Spleen (tissue), 13 donors: ENCODE measurements at regions of chr6 and their contacts with region 1.

Region 1: DNA sequence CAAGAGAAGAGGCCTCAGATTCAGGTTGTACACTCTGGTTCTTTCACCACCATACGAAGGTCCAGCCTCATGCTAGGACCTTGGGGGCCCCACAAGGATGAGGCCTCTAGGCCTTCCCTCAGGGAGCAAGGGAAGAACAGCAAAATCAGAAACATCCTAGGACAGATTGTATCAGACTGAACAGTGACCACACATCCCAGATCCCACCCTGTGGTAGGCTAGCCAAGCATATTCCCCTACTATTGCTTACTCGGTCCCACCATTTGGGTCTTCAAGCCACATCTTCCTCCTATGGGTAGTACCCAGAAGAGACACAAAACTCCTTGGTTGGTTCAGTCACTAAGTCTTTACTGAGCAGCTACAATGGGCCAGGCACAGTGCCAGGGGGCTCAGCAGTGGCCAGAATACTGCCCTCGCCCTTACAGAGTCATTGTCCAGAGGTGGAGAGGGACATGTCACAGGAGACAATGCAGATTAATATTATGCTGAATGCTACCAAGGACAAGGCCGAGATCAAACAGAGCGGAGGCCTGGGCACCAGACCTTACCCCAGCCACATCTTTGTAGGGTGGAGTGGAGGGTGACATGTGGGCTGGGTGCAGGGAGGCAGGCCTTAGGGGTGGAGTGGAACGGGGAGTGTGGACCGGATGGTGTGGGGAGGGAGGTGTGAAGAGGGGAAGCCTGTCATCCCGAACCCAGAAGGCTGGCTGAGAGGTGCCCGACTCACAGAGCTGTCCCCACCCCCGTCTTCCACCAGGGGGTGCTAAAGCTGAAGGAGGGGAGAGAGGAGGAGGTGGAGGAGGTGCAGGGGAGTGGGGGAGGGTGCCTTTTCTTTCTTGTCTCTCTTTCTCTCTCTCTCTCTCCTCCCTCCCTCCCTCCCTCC is 6.8 kb upstream of the MAPK13 start:
- DNase-seq: peak; percentile 96
- H3K4me3 ChIP-seq: peak overlapping the region in 1 of 8 donors; percentile 58
- H3K27ac ChIP-seq: peak overlapping the region in 7 of 8 donors; percentile 49 to 97 (median 96)
- H3K4me1 ChIP-seq: peaks cover 38 to 100% (median 82%) of the 10 kb centered on the region in 6 donors
- H3K27me3 ChIP-seq: no peaks in the 10 kb centered on the region
- CTCF ChIP-seq: peak; percentile 72 to 94 (median 90)
- POLR2A ChIP-seq: no peak

Region 2: GRCh38 chr6:35624341-35625070 is 499.0 kb before region 1 on chr6:
- intact Hi-C with region 1: no loop called
- DNase-seq: no peak
- H3K4me3 ChIP-seq: no peak overlapping the region
- H3K27ac ChIP-seq: peak overlapping the region in 7 of 8 donors; percentile 10 to 96 (median 49)
- H3K4me1 ChIP-seq: peaks cover 0 to 94% (median 29%) of the 10 kb centered on the region in 6 donors
- H3K27me3 ChIP-seq: no peaks in the 10 kb centered on the region
- CTCF ChIP-seq: peak in 8 of 11 experiments; percentile 35 to 65 (median 44)
- POLR2A ChIP-seq: no peak

Region 3: GRCh38 chr6:36350681-36351571 is 227.4 kb after region 1 on chr6:
- intact Hi-C with region 1: loop called (anchors 10 kb)
- DNase-seq: no peak
- H3K4me3 ChIP-seq: no peak overlapping the region
- H3K27ac ChIP-seq: no peak overlapping the region
- H3K4me1 ChIP-seq: peaks cover 0 to 20% (median 8%) of the 10 kb centered on the region in 6 donors
- H3K27me3 ChIP-seq: peaks cover 0 to 45% (median 0%) of the 10 kb centered on the region in 7 donors
- CTCF ChIP-seq: no peak
- POLR2A ChIP-seq: no peak

Region 4: GRCh38 chr6:36526066-36526465 is 402.6 kb after region 1 on chr6:
- intact Hi-C with region 1: no loop called
- DNase-seq: no peak
- H3K4me3 ChIP-seq: no peak overlapping the region
- H3K27ac ChIP-seq: peak overlapping the region in 2 of 8 donors; percentile 19 to 45
- H3K4me1 ChIP-seq: peaks cover 0 to 32% (median 16%) of the 10 kb centered on the region in 6 donors
- H3K27me3 ChIP-seq: no peaks in the 10 kb centered on the region
- CTCF ChIP-seq: no peak
- POLR2A ChIP-seq: no peak